Endothelial cell of umbilical vein (primary cell): ENCODE measurements at regions of chr6 and their contacts with region 1.

Region 1: GRCh38 chr6:90216072-90216977 is 80.3 kb downstream of the BACH2 start:
- DNase-seq: peak; percentile 60
- H3K4me3 ChIP-seq: no peak overlapping the region
- H3K27ac ChIP-seq: peak overlapping the region; percentile 10
- H3K4me1 ChIP-seq: peaks cover 48% of the 10 kb centered on the region
- H3K27me3 ChIP-seq: no peaks in the 10 kb centered on the region
- CTCF ChIP-seq: no peak
- POLR2A ChIP-seq: no peak

Region 2: DNA sequence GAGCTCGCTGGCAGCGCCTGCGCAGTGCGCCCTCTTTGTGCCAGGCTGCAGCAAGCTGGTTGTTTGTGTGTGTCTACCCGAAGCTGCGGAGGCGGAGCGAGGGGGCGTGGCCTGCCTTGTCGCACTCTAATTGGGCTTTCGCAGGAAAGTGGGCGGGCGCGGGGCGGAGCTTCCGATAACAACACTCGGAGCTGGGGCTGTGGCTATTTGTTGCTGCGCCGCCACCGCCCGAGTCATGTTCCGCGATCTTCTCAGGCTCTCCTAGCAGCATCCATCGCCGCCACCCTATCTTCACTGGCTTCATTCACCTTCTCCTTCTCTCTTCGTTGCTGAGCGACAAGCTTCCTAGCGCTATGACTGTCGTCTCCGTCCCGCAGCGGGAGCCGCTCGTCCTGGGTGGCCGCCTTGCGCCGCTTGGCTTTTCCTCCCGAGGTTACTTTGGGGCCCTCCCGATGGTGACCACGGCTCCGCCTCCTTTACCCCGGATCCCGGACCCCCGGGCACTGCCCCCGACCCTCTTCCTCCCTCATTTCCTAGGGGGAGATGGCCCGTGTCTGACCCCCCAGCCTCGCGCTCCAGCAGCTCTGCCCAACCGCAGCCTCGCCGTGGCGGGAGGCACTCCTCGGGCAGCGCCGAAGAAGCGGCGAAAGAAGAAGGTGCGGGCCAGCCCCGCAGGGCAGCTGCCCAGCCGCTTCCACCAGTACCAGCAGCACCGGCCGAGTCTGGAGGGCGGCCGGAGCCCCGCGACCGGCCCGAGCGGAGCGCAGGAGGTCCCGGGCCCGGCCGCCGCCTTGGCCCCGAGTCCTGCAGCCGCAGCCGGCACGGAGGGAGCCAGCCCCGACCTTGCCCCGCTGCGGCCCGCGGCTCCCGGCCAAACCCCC is 1135.5 kb before region 1 on chr6 and contains the start of gene PNRC1:
- CTCF ChIA-PET with region 1: no interaction called
- POLR2A ChIA-PET with region 1: no interaction called
- dilution Hi-C with region 1: no loop called
- intact Hi-C with region 1: loop called (anchors 5 kb)
- DNase-seq: peak; percentile 99
- H3K4me3 ChIP-seq: peak within 1 kb of the TSS; percentile 89 to 97 (median 94)
- H3K27ac ChIP-seq: peak within 1 kb of the TSS; percentile 92
- H3K4me1 ChIP-seq: peaks cover 11% of the 10 kb centered on the region
- H3K27me3 ChIP-seq: no peaks in the 10 kb centered on the region
- CTCF ChIP-seq: no peak
- POLR2A ChIP-seq: peak; percentile 91
- total RNA-seq, gene PNRC1: 87.9 and 88.4 TPM in 2 replicates

Region 3: DNA sequence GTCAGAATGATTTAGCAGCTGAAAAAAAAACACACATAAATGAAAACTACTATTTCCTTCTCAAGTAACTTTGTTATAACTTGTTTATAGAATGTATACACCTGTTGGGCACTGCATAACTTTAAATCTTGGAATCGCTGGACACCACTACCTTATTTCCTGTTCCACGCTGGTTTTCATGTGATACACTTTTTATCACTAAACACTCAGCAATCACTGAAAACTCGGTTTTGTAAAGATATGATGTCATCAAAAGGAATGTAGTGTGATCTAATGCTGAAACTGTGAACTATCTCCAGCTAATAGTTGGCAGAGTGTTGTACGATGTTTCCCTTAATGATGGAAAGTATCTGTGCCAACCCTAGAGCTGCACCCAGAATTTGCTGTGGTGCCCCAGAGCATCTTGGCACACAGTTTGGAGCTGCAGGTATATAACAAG is 47.6 kb before region 1 on chr6:
- CTCF ChIA-PET with region 1: no interaction called
- POLR2A ChIA-PET with region 1: no interaction called
- dilution Hi-C with region 1: no loop called
- intact Hi-C with region 1: no loop called
- DNase-seq: no peak
- H3K4me3 ChIP-seq: no peak overlapping the region
- H3K27ac ChIP-seq: no peak overlapping the region
- H3K4me1 ChIP-seq: no peaks in the 10 kb centered on the region
- H3K27me3 ChIP-seq: no peaks in the 10 kb centered on the region
- CTCF ChIP-seq: no peak
- POLR2A ChIP-seq: no peak

Region 4: GRCh38 chr6:90184334-90185298 is 31.7 kb before region 1 on chr6:
- CTCF ChIA-PET with region 1: interaction called, 9 read pairs
- POLR2A ChIA-PET with region 1: no interaction called
- dilution Hi-C with region 1: no loop called
- intact Hi-C with region 1: loop called (anchors 1 kb)
- DNase-seq: peak; percentile 92
- H3K4me3 ChIP-seq: no peak overlapping the region
- H3K27ac ChIP-seq: no peak overlapping the region
- H3K4me1 ChIP-seq: peaks cover 10% of the 10 kb centered on the region
- H3K27me3 ChIP-seq: no peaks in the 10 kb centered on the region
- CTCF ChIP-seq: no peak
- POLR2A ChIP-seq: no peak

Region 5: GRCh38 chr6:90285611-90286381 is 69.5 kb after region 1 on chr6:
- CTCF ChIA-PET with region 1: interaction called, 16 read pairs
- POLR2A ChIA-PET with region 1: interaction called, 5 read pairs
- dilution Hi-C with region 1: no loop called
- intact Hi-C with region 1: loop called (anchors 1 kb)
- DNase-seq: peak; percentile 90
- H3K4me3 ChIP-seq: peak overlapping the region in 1 of 3 experiments; percentile 64
- H3K27ac ChIP-seq: peak overlapping the region; percentile 99
- H3K4me1 ChIP-seq: peaks cover 22% of the 10 kb centered on the region
- H3K27me3 ChIP-seq: no peaks in the 10 kb centered on the region
- CTCF ChIP-seq: no peak
- POLR2A ChIP-seq: no peak

Region 6: DNA sequence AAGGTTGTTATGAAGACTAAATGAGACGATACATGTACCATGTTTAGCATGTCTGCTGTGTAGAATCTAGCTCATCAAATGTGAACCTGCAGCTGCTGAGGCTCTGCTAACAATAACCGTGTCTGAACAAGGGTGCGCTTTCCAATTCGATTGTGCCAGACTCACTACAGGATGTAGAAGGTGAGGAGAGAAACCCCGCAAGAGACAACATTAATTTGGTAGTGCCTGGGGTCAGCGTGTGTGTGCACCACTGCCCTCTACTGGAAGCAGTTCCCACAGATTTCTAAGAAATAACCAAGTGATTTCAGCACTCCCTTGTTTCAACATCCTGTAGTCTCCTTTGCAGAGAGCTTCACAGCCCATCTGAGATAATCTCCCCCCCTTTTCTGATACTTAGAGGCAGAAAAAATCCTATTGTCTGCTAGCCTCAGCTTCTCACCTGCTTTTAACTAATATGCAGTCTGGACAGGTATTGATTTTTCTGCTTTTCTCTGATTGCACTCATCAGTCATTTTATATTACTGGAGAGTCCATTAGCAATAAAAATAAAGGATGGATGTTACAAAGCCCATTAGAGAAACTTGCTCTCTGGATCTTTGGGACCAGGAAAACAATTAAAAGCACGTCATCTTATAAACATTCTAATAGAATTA is 177.0 kb after region 1 on chr6:
- CTCF ChIA-PET with region 1: interaction called, 9 read pairs
- POLR2A ChIA-PET with region 1: no interaction called
- dilution Hi-C with region 1: no loop called
- intact Hi-C with region 1: loop called (anchors 2 kb)
- DNase-seq: peak; percentile 65
- H3K4me3 ChIP-seq: no peak overlapping the region
- H3K27ac ChIP-seq: no peak overlapping the region
- H3K4me1 ChIP-seq: peaks cover 5% of the 10 kb centered on the region
- H3K27me3 ChIP-seq: peaks cover 7 to 17% of the 10 kb centered on the region in 2 experiments
- CTCF ChIP-seq: peak; percentile 67 to 69
- POLR2A ChIP-seq: no peak

Region 7: DNA sequence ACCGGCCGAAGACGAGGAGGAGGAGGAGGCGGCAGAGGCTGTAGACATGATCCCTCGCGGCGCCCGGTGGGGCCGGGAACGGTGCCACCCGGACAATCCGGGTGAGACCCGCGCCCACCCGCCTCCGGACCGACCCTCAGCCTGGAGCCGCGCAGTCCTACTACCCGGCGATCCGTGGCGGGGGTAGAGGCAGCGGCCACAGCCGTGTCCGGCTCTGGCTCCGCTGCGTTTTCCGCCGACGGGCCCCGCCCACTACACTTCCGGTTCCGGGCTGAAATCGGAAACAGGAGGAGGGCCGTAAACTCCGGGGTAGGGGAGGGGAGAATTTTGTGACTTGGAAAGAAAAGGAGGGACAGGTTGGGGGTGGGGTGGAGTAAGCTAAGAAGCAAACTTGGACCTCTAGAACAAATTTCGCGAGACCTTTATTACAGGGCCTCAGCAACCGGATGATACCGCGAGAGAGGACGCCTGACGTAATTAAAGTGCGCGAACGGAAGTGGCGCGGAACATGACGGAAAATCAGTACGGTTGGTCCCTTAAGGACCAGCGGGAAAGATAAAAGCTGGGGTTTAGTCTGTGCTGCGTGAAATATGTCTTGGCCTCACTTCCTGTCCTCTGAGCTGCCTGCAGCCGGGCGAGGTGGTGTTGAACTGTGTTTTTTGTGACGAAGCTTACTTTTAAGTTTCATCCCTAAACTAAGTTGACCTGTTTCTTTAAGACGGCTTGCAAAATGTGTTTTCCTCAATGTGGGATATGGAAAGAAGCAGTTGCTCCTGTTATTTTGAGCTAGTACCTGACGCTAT is 370.7 kb after region 1 on chr6 and contains the start of gene MAP3K7:
- CTCF ChIA-PET with region 1: no interaction called
- POLR2A ChIA-PET with region 1: no interaction called
- dilution Hi-C with region 1: no loop called
- intact Hi-C with region 1: loop called (anchors 1 kb)
- DNase-seq: peak; percentile 98
- H3K4me3 ChIP-seq: peak within 1 kb of the TSS; percentile 84 to 100 (median 95)
- H3K27ac ChIP-seq: peak within 1 kb of the TSS; percentile 88
- H3K4me1 ChIP-seq: peaks cover 22% of the 10 kb centered on the region
- H3K27me3 ChIP-seq: peaks cover 2 to 4% of the 10 kb centered on the region in 2 experiments
- CTCF ChIP-seq: no peak
- POLR2A ChIP-seq: peak; percentile 86
- total RNA-seq, gene MAP3K7: 24.5 and 25.6 TPM in 2 replicates